ENCODE measurements at regions of chr7 and their contacts with region 1.

Region 1: DNA sequence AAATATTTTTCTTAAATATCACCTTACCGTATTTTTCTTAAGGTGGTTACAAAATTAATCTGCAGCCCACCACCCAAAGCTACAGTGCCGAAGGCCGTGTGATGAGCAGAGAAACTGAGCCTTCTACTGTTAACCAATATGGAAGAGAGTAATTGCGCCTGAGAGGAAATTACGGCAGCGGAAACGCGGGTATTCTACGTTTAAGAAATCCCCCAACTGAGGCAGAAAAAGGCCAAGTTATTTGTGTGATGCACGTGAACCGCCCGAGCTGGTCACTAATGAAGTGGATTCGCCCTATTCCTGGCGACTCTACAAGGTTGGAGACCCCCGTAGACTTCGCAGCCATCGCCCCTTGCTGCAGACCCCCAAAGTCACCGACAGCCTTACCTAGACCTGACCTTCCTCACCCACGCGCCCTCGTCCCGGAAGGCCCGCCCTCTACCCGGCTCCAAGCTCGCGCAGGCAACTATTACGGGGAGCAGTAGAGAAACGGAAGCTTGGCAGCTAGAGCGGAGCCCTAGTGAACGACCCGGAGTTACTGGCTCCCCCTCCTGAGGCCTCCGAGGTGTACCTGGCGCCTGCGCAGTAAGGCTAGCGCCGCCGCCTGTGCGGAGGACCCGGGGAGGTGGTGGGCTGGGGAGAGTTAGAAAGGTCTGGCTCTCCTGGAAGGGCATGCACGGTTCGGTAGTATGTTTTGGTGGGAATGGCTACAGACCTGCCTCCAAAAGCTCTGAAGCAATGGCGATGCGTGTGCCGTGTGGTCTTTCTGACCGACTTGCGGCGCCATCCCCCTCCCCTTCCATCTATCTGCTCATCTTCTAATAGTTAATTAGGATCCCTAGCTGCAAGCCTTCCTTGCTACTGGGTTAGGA is at the start of gene MRPS33:
- DNase-seq: peak; percentile 97
- H3K4me3 Mint-ChIP-seq: peak within 1 kb of the TSS; percentile 95
- H3K27ac Mint-ChIP-seq: peak within 1 kb of the TSS; percentile 98
- H3K4me1 Mint-ChIP-seq: peaks cover 28% of the 10 kb centered on the region
- H3K27me3 Mint-ChIP-seq: peaks cover 3% of the 10 kb centered on the region
- total RNA-seq, gene MRPS33: 116 to 120 TPM

Region 2: GRCh38 chr7:140175221-140176121 is 839.3 kb before region 1 on chr7:
- CTCF ChIA-PET with region 1: no interaction called
- intact Hi-C with region 1: loop called (anchors 5 kb)
- DNase-seq: peak; percentile 97
- H3K4me3 Mint-ChIP-seq: peak overlapping the region; percentile 81
- H3K27ac Mint-ChIP-seq: peak overlapping the region; percentile 89
- H3K4me1 Mint-ChIP-seq: peaks cover 44% of the 10 kb centered on the region
- H3K27me3 Mint-ChIP-seq: no peaks in the 10 kb centered on the region

Region 3: GRCh38 chr7:140439359-140439758 is 575.4 kb before region 1 on chr7:
- CTCF ChIA-PET with region 1: no interaction called
- intact Hi-C with region 1: no loop called
- DNase-seq: no peak
- H3K4me3 Mint-ChIP-seq: no peak overlapping the region
- H3K27ac Mint-ChIP-seq: no peak overlapping the region
- H3K4me1 Mint-ChIP-seq: peaks cover 7% of the 10 kb centered on the region
- H3K27me3 Mint-ChIP-seq: no peaks in the 10 kb centered on the region

Region 4: DNA sequence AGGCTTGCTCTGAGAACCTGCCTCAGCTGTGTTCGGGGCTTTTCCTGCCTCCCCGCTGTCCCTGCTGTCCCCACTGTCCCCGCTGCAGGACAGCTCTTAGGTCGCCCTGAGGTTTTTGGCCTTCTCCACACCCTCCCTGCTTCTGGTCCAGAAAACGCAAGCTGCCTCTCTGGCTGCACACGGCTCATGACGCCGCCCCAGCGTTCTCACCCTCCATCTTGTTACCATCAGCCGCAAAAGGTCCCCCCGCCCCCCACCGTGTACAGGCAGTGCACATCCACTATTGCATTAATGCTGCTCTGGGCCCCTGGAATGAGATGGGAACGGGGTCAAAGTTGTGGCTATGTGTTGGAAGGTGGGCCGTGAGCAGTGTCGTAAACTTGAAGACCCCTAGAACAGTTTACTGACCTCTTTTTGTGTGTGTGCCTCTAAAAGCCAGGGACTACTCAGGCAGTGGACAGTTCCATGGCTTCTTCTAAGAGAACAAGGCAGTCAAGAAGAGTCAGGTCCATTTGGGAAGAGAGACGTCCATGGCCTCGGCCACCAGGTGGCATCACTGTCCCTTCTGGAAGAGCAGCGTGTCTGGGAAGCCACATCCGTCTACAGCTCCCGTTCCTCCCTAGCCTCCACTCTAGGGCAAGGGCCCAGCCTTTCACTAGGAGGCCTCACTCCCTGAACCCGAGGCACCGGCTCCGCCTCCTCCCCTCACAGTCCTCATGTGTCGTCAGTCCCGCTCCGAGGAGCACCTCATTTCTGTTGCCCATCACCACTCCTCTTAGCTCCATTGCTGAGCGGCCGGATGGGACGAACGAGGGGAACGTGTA is 497.0 kb before region 1 on chr7:
- CTCF ChIA-PET with region 1: interaction called, 3 read pairs
- intact Hi-C with region 1: loop called (anchors 1 kb)
- DNase-seq: peak; percentile 86
- H3K4me3 Mint-ChIP-seq: no peak overlapping the region
- H3K27ac Mint-ChIP-seq: no peak overlapping the region
- H3K4me1 Mint-ChIP-seq: peaks cover 5% of the 10 kb centered on the region
- H3K27me3 Mint-ChIP-seq: no peaks in the 10 kb centered on the region

Region 5: GRCh38 chr7:140726281-140726680 is 288.5 kb before region 1 on chr7:
- CTCF ChIA-PET with region 1: interaction called, 4 read pairs
- intact Hi-C with region 1: loop called (anchors 1 kb)
- DNase-seq: no peak
- H3K4me3 Mint-ChIP-seq: no peak overlapping the region
- H3K27ac Mint-ChIP-seq: no peak overlapping the region
- H3K4me1 Mint-ChIP-seq: peaks cover 17% of the 10 kb centered on the region
- H3K27me3 Mint-ChIP-seq: no peaks in the 10 kb centered on the region

Region 6: DNA sequence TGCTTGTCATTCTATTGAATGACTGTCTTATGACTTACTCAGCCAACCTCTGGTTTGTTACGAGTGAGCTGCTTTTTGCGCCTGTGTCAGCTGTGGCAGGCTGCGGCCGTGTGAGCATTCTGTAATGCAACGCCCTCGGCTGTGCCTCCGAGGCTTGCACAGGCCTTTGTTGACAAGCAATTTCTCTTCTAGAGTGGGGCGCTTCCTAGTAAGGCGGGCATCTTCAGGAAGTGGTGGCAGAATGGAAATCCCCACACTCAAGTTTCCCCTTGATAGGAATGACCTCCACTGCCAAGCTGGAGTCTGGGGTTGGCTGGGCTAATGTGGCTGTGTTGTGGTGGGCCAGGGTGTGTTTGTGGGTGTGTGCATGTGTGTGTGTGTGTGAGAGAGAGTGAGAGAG is 38.9 kb after region 1 on chr7:
- CTCF ChIA-PET with region 1: interaction called, 3 read pairs
- intact Hi-C with region 1: loop called (anchors 1 kb)
- DNase-seq: peak; percentile 75
- H3K4me3 Mint-ChIP-seq: no peak overlapping the region
- H3K27ac Mint-ChIP-seq: peak overlapping the region; percentile 73
- H3K4me1 Mint-ChIP-seq: peaks cover 17% of the 10 kb centered on the region
- H3K27me3 Mint-ChIP-seq: no peaks in the 10 kb centered on the region

Region 7: DNA sequence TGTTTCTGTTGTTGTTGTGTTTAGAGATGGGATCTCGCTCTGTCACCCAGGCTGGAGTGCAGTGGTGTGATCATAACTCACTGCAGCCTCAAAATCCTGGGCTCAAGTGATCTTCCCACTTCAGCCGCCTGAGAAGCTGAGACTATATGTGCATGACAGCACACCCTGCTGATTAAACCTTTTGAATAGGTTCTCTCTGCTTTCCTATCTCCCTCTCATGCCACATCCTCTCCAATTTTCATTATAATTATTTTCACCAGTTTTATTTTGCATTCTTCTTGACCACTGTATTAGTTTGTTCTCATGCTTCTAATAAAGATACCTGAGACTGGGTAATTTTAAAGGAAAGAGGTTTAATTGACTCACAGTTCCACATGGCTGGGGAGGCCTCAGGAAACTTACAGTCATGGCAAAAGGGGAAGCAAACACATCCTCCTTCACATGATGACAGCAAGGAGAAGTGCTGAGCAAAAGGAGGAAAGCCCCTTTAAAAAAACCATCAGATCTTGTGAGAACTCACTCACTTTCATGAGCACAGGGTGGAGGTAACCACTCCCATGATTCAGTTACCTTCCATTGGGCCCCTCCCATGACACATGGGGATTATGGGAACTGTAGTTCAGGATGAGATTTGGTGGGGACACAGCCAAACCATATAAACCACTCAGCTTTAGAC is 549.3 kb after region 1 on chr7:
- CTCF ChIA-PET with region 1: no interaction called
- intact Hi-C with region 1: loop called (anchors 2 kb)
- DNase-seq: peak; percentile 70
- H3K4me3 Mint-ChIP-seq: no peak overlapping the region
- H3K27ac Mint-ChIP-seq: peak overlapping the region; percentile 35
- H3K4me1 Mint-ChIP-seq: peaks cover 55% of the 10 kb centered on the region
- H3K27me3 Mint-ChIP-seq: no peaks in the 10 kb centered on the region

Measured in activated naive CD4-positive, alpha-beta T cell treated with anti-CD3 and anti-CD28 coated beads for 36 hours (primary cell).